ENCODE measurements at regions of chr5 and their contacts with region 1.

Region 1: GRCh38 chr5:159156426-159157238 is 52.7 kb downstream of the RNF145 start:
- DNase-seq: peak; percentile 53
- H3K4me3 ChIP-seq: no peak overlapping the region
- H3K27ac ChIP-seq: no peak overlapping the region
- H3K4me1 ChIP-seq: no peaks in the 10 kb centered on the region
- H3K27me3 ChIP-seq: no peaks in the 10 kb centered on the region
- CTCF ChIP-seq: peak; percentile 87

Region 2: DNA sequence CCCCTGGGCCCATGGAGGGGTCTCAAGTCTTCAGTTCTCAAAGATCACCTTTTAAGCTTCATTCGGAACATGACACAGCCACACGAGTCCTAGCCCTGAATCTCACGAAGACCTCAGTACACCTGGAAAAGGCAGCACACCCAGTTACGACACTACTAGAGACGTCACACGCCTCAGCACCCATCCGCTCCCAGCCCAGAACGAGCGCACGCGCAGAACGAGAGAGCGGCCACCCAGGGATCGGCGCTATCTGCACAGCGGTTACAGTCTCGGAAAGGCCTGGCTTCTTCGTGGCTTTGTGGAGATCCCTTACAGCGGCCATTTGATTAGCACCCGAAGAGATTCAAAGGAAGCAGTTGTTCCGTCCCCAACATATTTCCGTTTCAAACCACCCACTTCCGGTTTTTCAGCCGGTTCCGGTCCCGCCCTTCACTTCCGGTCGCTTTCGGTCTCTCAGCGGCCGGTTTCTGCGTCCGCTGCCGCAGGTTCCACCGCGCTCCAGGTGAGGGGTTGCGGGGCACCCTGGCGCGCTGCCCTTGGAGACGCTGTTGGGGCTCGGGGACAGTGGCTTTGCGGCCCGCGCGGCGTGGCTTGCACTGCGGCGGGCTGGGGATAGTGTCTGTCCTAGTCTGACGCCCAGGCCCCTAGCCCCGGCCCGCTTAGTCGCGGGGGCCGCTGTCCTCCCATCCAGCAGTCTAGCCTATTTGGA is 106.4 kb after region 1 on chr5 and contains the start of gene UBLCP1:
- intact Hi-C with region 1: loop called (anchors 5 kb)
- DNase-seq: peak; percentile 85
- H3K4me3 ChIP-seq: peak within 1 kb of the TSS; percentile 92
- H3K27ac ChIP-seq: peak within 1 kb of the TSS; percentile 92
- H3K4me1 ChIP-seq: peaks cover 5% of the 10 kb centered on the region
- H3K27me3 ChIP-seq: no peaks in the 10 kb centered on the region
- CTCF ChIP-seq: no peak
- total RNA-seq, gene UBLCP1: 11.8 to 17.2 TPM

Region 3: GRCh38 chr5:159316519-159317383 is 160.1 kb after region 1 on chr5:
- intact Hi-C with region 1: loop called (anchors 1 kb)
- DNase-seq: peak; percentile 30
- H3K4me3 ChIP-seq: no peak overlapping the region
- H3K27ac ChIP-seq: no peak overlapping the region
- H3K4me1 ChIP-seq: no peaks in the 10 kb centered on the region
- H3K27me3 ChIP-seq: no peaks in the 10 kb centered on the region
- CTCF ChIP-seq: peak; percentile 59

Measured in colonic mucosa (tissue), 4 donors.